Naive thymus-derived CD8-positive, alpha-beta T cell (primary cell): ENCODE measurements at regions of chr12 and their contacts with region 1.

Region 1: DNA sequence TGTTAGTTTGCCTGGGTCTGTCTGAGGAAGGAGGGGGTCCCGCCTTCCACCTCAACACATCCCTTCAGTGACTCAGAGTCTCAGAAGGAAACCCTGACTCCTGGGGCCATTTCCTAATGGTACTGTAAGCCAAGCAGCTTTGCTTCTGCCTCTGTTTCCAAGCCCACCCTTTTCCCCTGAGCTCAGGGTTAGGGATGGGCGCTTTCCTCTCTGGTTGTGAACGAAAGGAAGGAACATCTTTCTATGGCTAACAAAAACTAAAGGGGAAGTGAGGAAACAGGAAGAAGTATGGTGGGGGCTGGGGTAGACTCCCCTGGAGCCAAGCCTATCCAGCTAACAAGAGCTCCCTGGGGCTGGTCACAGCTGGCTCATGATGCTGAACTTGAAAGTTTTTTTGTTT is 11.6 kb upstream of the UNC119B start:
- DNase-seq: no peak
- ATAC-seq: no peak
- H3K4me3 Mint-ChIP-seq: no peak overlapping the region
- H3K27ac Mint-ChIP-seq: peak overlapping the region in 2 of 10 donors; percentile 12 to 29
- H3K4me1 Mint-ChIP-seq: peaks cover 0 to 7% (median 2%) of the 10 kb centered on the region in 4 donors
- H3K27me3 Mint-ChIP-seq: no peaks in the 10 kb centered on the region

Region 2: GRCh38 chr12:120662879-120663278 is 35.8 kb before region 1 on chr12:
- POLR2A ChIA-PET with region 1: no interaction called
- DNase-seq: no peak
- ATAC-seq: no peak
- H3K4me3 Mint-ChIP-seq: no peak overlapping the region
- H3K27ac Mint-ChIP-seq: peak overlapping the region in 1 of 10 donors; percentile 43
- H3K4me1 Mint-ChIP-seq: peaks cover 0 to 7% (median 1%) of the 10 kb centered on the region in 4 donors
- H3K27me3 Mint-ChIP-seq: peaks cover 0 to 3% (median 0%) of the 10 kb centered on the region in 5 donors

Region 3: GRCh38 chr12:120686690-120687577 is 11.7 kb before region 1 on chr12 and contains the start of gene MLEC:
- POLR2A ChIA-PET with region 1: interaction called, 11 read pairs
- DNase-seq: peak; percentile 98 to 100 (median 99)
- ATAC-seq: peak; percentile 81 to 83
- H3K4me3 Mint-ChIP-seq: peak within 1 kb of the TSS; percentile 85 to 97 (median 92)
- H3K27ac Mint-ChIP-seq: peak within 1 kb of the TSS; percentile 88 to 98 (median 96)
- H3K4me1 Mint-ChIP-seq: peaks cover 19 to 62% (median 39%) of the 10 kb centered on the region in 4 donors
- H3K27me3 Mint-ChIP-seq: no peaks in the 10 kb centered on the region
- polyA plus RNA-seq, gene MLEC: 32.7 to 41.2 (median 36.0) TPM